ENCODE measurements at regions of chr19 and their contacts with region 1.

Region 1: DNA sequence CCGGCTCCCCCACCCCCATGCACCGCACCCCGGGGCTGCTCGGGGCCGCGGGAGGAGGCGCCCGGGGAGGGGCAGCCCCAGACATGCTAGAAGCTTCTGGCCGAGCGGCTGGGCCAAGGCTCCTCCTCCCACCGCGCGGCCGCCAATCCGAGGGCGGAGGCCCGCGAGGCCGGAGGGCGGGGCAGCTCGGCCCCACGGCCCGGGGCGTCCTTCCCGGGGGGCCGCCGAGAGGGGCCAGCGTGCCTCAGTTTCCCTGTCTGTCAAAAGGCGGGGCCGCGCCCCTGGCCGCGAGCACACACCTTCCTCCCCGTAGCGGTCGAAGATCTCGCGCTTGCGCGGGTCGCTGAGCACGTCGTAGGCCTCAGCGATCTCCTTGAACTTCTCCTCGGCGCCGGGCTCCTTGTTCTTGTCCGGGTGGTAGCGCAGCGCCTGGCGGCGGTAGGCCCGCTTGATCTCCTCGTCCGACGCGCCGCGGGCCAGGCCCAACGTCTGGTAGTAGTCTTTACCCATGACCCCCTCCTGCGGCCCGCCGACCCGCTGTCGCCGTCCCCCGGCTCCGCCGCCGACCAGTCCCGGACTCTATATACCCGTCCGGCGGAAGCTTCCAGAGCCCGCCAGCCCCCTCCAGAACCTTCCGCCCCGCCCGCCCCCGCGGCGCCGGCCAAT is at the start of gene DNAJB1:
- DNase-seq: peak in 2 of 9 donors; percentile 53 to 86
- ATAC-seq: peak; percentile 33
- H3K4me3 ChIP-seq: peak within 1 kb of the TSS; percentile 73
- H3K4me3 Mint-ChIP-seq: peak within 1 kb of the TSS; percentile 93 to 99 (median 96)
- H3K27ac ChIP-seq: peak within 1 kb of the TSS; percentile 97
- H3K27ac Mint-ChIP-seq: peak within 1 kb of the TSS; percentile 92 to 100 (median 98)
- H3K4me1 ChIP-seq: peaks cover 57 to 64% of the 10 kb centered on the region in 2 donors
- H3K4me1 Mint-ChIP-seq: peaks cover 42 to 80% (median 72%) of the 10 kb centered on the region in 7 donors
- H3K27me3 ChIP-seq: no peaks in the 10 kb centered on the region
- H3K27me3 Mint-ChIP-seq: peaks cover 0 to 2% (median 0%) of the 10 kb centered on the region in 5 donors
- total RNA-seq, gene DNAJB1: 87.4 to 574 (median 177) TPM

Region 2: DNA sequence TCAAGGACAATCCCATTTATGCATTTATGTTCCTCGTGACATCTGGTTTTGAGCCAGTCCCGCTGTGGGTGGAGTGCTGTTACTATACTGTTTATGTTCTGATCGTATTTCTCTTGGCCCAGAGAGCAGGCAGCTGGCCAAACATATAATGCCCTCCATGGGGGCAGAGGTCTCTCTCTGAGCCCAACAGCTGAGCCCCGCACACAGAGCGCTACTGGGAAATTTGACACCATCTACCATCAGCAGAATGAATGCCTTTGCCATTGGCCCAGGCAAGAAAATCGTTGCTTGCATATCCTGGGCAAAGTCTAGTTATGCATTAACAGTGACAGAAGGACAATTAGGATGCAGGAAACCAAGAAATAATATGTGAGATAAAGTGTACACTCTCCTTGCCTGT is 884.9 kb before region 1 on chr19:
- CTCF ChIA-PET with region 1: no interaction called
- POLR2A ChIA-PET with region 1: no interaction called
- intact Hi-C with region 1: no loop called
- DNase-seq: no peak
- ATAC-seq: no peak
- H3K4me3 ChIP-seq: no peak overlapping the region
- H3K4me3 Mint-ChIP-seq: no peak overlapping the region
- H3K27ac ChIP-seq: no peak overlapping the region
- H3K27ac Mint-ChIP-seq: no peak overlapping the region
- H3K4me1 ChIP-seq: no peaks in the 10 kb centered on the region
- H3K4me1 Mint-ChIP-seq: peaks cover 0 to 3% (median 0%) of the 10 kb centered on the region in 7 donors
- H3K27me3 ChIP-seq: peaks cover 0 to 3% of the 10 kb centered on the region in 2 donors
- H3K27me3 Mint-ChIP-seq: peaks cover 0 to 24% (median 17%) of the 10 kb centered on the region in 5 donors

Region 3: GRCh38 chr19:14402332-14403144 is 115.4 kb before region 1 on chr19:
- CTCF ChIA-PET with region 1: no interaction called
- POLR2A ChIA-PET with region 1: no interaction called
- intact Hi-C with region 1: no loop called
- DNase-seq: no peak
- ATAC-seq: peak; percentile 3
- H3K4me3 ChIP-seq: no peak overlapping the region
- H3K4me3 Mint-ChIP-seq: no peak overlapping the region
- H3K27ac ChIP-seq: no peak overlapping the region
- H3K27ac Mint-ChIP-seq: peak overlapping the region in 6 of 9 donors; percentile 40 to 89 (median 56)
- H3K4me1 ChIP-seq: peaks cover 7 to 8% of the 10 kb centered on the region in 2 donors
- H3K4me1 Mint-ChIP-seq: peaks cover 4 to 19% (median 7%) of the 10 kb centered on the region in 7 donors
- H3K27me3 ChIP-seq: no peaks in the 10 kb centered on the region
- H3K27me3 Mint-ChIP-seq: no peaks in the 10 kb centered on the region

Region 4: DNA sequence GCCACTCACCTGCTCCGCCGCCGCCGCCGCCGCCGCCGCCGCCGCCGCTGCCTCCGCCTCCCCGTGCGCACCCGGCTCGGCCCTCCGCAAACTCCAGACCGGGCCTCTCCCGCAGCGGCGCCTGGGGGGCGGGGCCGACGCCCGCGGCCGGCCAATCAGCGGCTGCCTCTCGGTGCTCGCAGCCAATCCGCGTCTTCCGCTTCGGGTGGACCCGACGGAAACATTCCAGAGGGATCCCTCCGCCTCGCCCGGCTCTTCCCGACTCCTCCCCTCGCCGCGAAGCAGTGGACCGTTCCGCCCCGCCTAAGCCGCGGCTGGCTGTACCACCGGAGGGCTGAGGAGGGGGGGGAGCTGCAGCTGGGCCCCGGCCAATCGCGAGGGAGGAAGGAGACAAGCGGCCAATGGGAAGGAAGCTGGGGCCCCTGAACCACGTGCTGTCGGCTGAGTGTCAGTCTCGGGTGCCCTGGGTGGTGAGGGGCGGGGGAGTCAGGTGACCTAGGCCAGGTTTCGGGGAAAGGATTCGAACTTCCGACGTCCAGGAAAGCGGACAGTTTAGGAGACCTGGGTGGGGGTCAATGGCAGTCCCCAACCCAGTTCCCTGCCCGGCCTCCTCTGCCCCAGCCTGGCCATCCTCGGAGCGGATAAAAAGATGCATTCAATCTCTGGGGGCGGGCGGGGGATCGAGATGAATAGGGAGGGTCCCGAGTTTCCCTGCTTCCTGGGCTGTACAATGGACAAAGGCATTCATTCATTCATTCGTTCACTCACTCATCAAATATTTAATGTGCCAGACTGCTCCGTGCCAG is 21.7 kb before region 1 on chr19 and contains the start of gene GIPC1:
- CTCF ChIA-PET with region 1: interaction called, 5 read pairs
- POLR2A ChIA-PET with region 1: interaction called, 1,101 read pairs
- intact Hi-C with region 1: loop called (anchors 1 kb)
- DNase-seq: peak; percentile 80 to 92 (median 86)
- ATAC-seq: peak; percentile 94
- H3K4me3 ChIP-seq: peak within 1 kb of the TSS; percentile 74
- H3K4me3 Mint-ChIP-seq: peak within 1 kb of the TSS; percentile 74 to 91 (median 88)
- H3K27ac ChIP-seq: peak within 1 kb of the TSS; percentile 80
- H3K27ac Mint-ChIP-seq: peak within 1 kb of the TSS; percentile 79 to 93 (median 87)
- H3K4me1 ChIP-seq: peaks cover 12 to 14% of the 10 kb centered on the region in 2 donors
- H3K4me1 Mint-ChIP-seq: peaks cover 5 to 35% (median 28%) of the 10 kb centered on the region in 7 donors
- H3K27me3 ChIP-seq: no peaks in the 10 kb centered on the region
- H3K27me3 Mint-ChIP-seq: no peaks in the 10 kb centered on the region
- total RNA-seq, gene GIPC1: 21.3 to 45.4 (median 24.7) TPM

Region 5: DNA sequence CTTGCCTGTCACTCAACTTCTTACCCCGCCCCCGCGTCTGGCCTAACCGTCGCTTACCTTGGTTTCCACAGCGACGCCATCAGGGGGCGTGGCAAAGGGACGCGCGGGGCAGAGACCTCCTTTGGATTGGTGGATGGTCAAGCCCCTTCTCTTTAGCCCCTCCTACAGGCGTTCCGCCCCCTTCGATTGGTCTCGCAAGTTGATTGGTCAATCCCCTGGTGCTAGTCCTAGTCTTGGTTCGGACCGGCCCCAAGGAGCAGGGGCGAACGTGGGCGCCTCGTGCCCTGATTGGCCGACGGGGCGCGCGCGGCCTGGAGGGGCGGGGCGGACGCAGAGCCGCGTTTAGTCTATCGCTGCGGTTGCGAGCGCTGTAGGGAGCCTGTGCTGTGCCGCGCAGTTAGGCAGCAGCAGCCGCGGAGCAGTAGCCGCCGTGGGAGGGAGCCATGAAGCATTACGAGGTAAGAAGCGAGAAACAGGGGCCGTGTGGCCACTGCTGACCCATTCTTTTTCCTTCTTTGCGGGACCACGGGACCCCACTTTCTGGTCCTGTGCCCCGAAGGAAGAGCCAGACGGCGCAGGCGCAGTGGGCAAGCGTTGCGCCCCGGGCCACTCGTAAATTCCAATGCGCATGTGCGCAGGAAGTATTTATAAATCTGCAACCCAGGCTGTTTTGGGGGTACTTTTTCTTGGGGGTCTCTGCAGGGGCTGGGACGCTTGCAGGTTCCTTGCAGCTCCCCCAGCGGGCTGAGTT is 11.5 kb after region 1 on chr19 and contains the start of gene TECR:
- CTCF ChIA-PET with region 1: interaction called, 5 read pairs
- POLR2A ChIA-PET with region 1: interaction called, 1,101 read pairs
- intact Hi-C with region 1: loop called (anchors 1 kb)
- DNase-seq: peak; percentile 98 to 100 (median 100)
- ATAC-seq: peak; percentile 96
- H3K4me3 ChIP-seq: peak within 1 kb of the TSS; percentile 96
- H3K4me3 Mint-ChIP-seq: peak within 1 kb of the TSS; percentile 88 to 97 (median 95)
- H3K27ac ChIP-seq: peak within 1 kb of the TSS; percentile 89
- H3K27ac Mint-ChIP-seq: peak within 1 kb of the TSS; percentile 95 to 100 (median 98)
- H3K4me1 ChIP-seq: peaks cover 22 to 30% of the 10 kb centered on the region in 2 donors
- H3K4me1 Mint-ChIP-seq: peaks cover 9 to 72% (median 54%) of the 10 kb centered on the region in 7 donors
- H3K27me3 ChIP-seq: no peaks in the 10 kb centered on the region
- H3K27me3 Mint-ChIP-seq: no peaks in the 10 kb centered on the region
- total RNA-seq, gene TECR: 123 to 218 (median 150) TPM

Region 6: GRCh38 chr19:14556662-14557188 is 38.8 kb after region 1 on chr19:
- CTCF ChIA-PET with region 1: interaction called, 5 read pairs
- POLR2A ChIA-PET with region 1: interaction called, 41 read pairs
- intact Hi-C with region 1: loop called in 1 of 2 experiments (anchors 1 kb)
- DNase-seq: peak; percentile 42 to 75 (median 60)
- ATAC-seq: peak; percentile 91
- H3K4me3 ChIP-seq: peak overlapping the region; percentile 10
- H3K4me3 Mint-ChIP-seq: peak overlapping the region; percentile 29 to 79 (median 68)
- H3K27ac ChIP-seq: no peak overlapping the region
- H3K27ac Mint-ChIP-seq: peak overlapping the region in 8 of 9 donors; percentile 79 to 90 (median 84)
- H3K4me1 ChIP-seq: peaks cover 15 to 53% of the 10 kb centered on the region in 2 donors
- H3K4me1 Mint-ChIP-seq: peaks cover 28 to 71% (median 40%) of the 10 kb centered on the region in 7 donors
- H3K27me3 ChIP-seq: no peaks in the 10 kb centered on the region
- H3K27me3 Mint-ChIP-seq: no peaks in the 10 kb centered on the region

Measured in naive thymus-derived CD4-positive, alpha-beta T cell (primary cell).